Activated CD4-positive, alpha-beta memory T cell treated with anti-CD3 and anti-CD28 coated beads for 36 hours (primary cell): ENCODE measurements at regions of chr3 and their contacts with region 1.

Region 1: DNA sequence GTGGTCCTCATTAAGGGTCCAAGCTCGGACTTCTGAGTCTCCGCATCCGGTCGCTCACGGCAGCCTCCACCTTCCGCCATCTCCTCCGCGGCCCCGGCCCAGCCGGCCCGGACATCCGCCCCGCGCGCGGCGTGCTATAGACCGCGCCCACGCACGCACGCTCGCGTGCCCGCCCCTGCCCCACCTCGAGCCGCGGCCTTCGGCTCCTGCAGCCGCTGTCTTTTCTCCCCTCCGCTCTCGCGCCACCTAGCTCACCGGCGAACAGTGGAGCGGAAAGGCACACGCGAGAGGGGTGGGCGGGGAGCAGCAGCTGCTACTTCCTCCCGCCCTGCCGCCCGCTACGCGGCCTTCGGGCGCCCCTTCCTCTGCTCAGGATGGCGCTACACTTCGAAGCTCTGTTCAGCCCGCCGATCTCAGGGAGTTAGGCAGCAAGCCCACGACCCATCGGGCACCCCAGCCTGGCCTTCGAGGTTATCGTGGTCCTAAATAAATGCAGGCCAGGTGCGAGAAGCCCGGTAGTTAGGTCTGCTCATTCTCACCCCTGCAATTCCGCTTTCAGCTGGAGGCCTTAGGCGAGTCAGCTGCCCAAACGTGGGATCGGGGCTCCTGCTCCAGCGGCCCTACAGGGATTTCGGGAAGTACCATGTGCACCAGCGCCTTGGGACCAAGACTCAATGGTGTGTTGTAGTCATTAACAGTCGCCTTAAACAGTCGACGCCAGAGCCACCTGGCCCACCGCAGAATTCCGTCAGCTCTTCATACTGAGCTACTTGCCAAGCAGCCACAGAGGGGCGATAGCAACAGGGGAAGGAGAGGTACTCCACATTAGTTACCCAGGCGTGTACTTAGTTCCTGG is at the start of gene USP4:
- DNase-seq: peak; percentile 97
- H3K4me3 Mint-ChIP-seq: peak within 1 kb of the TSS; percentile 96
- H3K27ac Mint-ChIP-seq: peak within 1 kb of the TSS; percentile 99
- H3K4me1 Mint-ChIP-seq: peaks cover 43% of the 10 kb centered on the region
- H3K27me3 Mint-ChIP-seq: no peaks in the 10 kb centered on the region
- total RNA-seq, gene USP4: 79.4 to 79.7 TPM

Region 2: GRCh38 chr3:49021813-49022687 is 318.1 kb before region 1 on chr3 and contains the start of gene NDUFAF3:
- CTCF ChIA-PET with region 1: interaction called, 5 read pairs
- POLR2A ChIA-PET with region 1: interaction called, 6 read pairs
- intact Hi-C with region 1: loop called (anchors 10 kb)
- DNase-seq: peak; percentile 96
- H3K4me3 Mint-ChIP-seq: peak within 1 kb of the TSS; percentile 97
- H3K27ac Mint-ChIP-seq: peak within 1 kb of the TSS; percentile 98
- H3K4me1 Mint-ChIP-seq: peaks cover 56% of the 10 kb centered on the region
- H3K27me3 Mint-ChIP-seq: no peaks in the 10 kb centered on the region
- total RNA-seq, gene NDUFAF3: 101 to 106 TPM

Region 3: DNA sequence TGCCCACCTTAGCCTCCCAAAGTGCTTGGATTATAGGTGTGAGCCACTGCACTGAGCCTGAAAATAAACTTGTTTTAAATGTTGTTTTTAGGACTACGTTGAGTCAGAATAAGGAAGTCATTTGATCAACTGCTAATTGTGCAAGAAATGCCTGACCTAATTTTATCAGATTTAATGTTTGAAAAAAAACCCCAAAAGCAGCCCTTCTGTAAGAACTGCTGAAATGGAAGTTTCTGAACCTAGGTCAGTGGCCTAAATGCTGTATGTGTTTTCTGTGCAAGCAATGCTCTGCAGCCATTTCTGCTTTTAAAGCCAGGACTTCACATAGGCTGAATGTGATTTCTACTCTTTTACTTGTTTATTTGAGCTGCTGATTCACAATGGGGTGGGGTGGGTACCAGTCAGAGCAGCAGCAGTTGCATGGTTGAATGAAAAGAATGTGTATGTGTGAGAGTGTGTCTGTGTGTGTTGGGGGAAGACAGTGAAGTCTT is 11.4 kb after region 1 on chr3:
- CTCF ChIA-PET with region 1: interaction called, 39 read pairs
- POLR2A ChIA-PET with region 1: interaction called, 7 read pairs
- intact Hi-C with region 1: no loop called
- DNase-seq: no peak
- H3K4me3 Mint-ChIP-seq: no peak overlapping the region
- H3K27ac Mint-ChIP-seq: peak overlapping the region; percentile 71
- H3K4me1 Mint-ChIP-seq: peaks cover 20% of the 10 kb centered on the region
- H3K27me3 Mint-ChIP-seq: no peaks in the 10 kb centered on the region

Region 4: GRCh38 chr3:49377483-49377882 is 37.3 kb after region 1 on chr3:
- CTCF ChIA-PET with region 1: no interaction called
- POLR2A ChIA-PET with region 1: interaction called, 6 read pairs
- intact Hi-C with region 1: loop called (anchors 1 kb)
- DNase-seq: peak; percentile 87
- H3K4me3 Mint-ChIP-seq: no peak overlapping the region
- H3K27ac Mint-ChIP-seq: peak overlapping the region; percentile 79
- H3K4me1 Mint-ChIP-seq: peaks cover 34% of the 10 kb centered on the region
- H3K27me3 Mint-ChIP-seq: no peaks in the 10 kb centered on the region

Region 5: GRCh38 chr3:49428697-49429100 is 88.5 kb after region 1 on chr3:
- CTCF ChIA-PET with region 1: interaction called, 10 read pairs
- POLR2A ChIA-PET with region 1: no interaction called
- intact Hi-C with region 1: no loop called
- DNase-seq: no peak
- H3K4me3 Mint-ChIP-seq: peak overlapping the region; percentile 77
- H3K27ac Mint-ChIP-seq: peak overlapping the region; percentile 73
- H3K4me1 Mint-ChIP-seq: peaks cover 14% of the 10 kb centered on the region
- H3K27me3 Mint-ChIP-seq: no peaks in the 10 kb centered on the region

Region 6: DNA sequence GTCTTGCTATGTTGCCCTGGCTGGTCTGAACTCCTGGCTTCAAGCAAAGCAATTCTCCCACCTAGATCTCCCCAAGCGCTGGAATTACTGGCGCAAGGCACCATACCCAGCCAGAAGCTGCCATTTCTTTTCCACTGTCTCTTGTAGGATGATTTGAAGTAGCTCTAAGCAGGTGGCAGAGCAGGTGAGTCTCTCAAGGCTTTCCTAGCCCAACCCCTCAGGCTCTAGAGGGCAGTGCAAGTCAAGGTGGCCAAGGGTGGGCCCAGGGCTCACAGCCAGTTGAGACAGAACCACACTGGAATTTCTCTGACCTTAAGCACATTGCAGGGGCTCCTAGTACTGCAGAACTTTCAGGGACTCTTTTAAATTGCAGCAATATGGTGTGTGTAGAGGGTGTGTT is 114.3 kb after region 1 on chr3:
- CTCF ChIA-PET with region 1: interaction called, 49 read pairs
- POLR2A ChIA-PET with region 1: interaction called, 6 read pairs
- intact Hi-C with region 1: loop called (anchors 1 kb)
- DNase-seq: no peak
- H3K4me3 Mint-ChIP-seq: no peak overlapping the region
- H3K27ac Mint-ChIP-seq: no peak overlapping the region
- H3K4me1 Mint-ChIP-seq: no peaks in the 10 kb centered on the region
- H3K27me3 Mint-ChIP-seq: no peaks in the 10 kb centered on the region

Region 7: DNA sequence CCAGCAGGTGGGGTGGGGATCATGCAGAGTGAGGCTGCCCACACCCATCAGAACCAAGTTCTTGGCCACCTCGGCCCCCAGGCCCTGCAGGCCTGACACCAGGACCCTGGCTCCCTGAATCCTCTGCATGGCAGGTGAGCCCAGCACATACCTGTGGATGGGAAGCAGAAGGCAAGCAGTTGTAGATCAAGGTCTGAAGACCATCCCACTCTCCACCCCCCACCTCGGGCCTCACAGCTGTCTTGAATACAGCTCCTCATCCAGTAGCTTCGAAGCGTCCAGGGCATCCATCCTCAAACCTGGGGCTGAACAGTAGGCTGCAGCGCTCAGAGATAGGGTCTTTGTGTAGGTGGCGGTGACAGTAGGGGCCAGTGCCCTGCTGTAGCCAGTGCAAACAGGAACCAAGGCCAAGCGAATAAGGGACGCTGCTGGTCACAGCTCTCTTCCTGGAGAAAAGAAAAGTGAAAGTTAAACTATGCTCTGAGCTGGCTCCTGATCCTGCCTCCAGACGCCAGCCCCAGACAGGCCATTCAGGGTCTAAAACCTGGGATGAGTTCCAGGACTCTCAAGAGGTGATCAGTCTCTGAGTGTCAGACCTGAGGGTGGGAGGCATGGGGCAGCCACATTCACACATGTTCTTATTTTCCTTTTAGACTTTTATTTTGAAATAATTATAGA is 473.5 kb after region 1 on chr3 and contains the start of gene UBA7:
- CTCF ChIA-PET with region 1: no interaction called
- POLR2A ChIA-PET with region 1: no interaction called
- intact Hi-C with region 1: no loop called
- DNase-seq: peak; percentile 57
- H3K4me3 Mint-ChIP-seq: peak within 1 kb of the TSS; percentile 93
- H3K27ac Mint-ChIP-seq: peak within 1 kb of the TSS; percentile 90
- H3K4me1 Mint-ChIP-seq: peaks cover 26% of the 10 kb centered on the region
- H3K27me3 Mint-ChIP-seq: no peaks in the 10 kb centered on the region
- total RNA-seq, gene UBA7: 85.6 to 86.4 TPM